Caco-2 (cell line): ENCODE measurements at regions of chr12 and their contacts with region 1.

Region 1: DNA sequence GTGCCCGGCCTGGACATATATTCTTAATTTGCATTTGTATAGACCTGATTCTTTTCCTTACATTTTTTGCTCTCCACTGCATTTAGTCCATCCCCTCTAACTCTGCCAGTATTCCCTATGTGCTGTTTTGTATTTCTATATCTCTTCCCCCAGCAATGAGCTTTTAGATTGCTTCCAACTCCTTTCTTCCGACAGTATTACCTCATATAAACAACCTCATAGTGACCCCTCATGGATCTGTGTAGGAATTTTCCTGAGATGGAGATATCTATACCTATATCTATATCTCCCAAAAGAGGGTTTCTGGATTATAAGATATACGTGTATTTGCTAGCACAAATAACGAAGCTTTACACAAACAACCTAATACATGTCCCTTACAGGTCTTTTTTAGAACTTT is 161.9 kb downstream of the CRADD start:
- DNase-seq: no peak
- H3K4me3 ChIP-seq: no peak overlapping the region
- H3K4me3 Mint-ChIP-seq: no peak overlapping the region
- H3K27ac Mint-ChIP-seq: no peak overlapping the region
- H3K4me1 ChIP-seq: no peaks in the 10 kb centered on the region
- H3K4me1 Mint-ChIP-seq: peaks cover 17% of the 10 kb centered on the region
- H3K27me3 ChIP-seq: no peaks in the 10 kb centered on the region
- H3K27me3 Mint-ChIP-seq: no peaks in the 10 kb centered on the region
- CTCF ChIP-seq: no peak

Region 2: DNA sequence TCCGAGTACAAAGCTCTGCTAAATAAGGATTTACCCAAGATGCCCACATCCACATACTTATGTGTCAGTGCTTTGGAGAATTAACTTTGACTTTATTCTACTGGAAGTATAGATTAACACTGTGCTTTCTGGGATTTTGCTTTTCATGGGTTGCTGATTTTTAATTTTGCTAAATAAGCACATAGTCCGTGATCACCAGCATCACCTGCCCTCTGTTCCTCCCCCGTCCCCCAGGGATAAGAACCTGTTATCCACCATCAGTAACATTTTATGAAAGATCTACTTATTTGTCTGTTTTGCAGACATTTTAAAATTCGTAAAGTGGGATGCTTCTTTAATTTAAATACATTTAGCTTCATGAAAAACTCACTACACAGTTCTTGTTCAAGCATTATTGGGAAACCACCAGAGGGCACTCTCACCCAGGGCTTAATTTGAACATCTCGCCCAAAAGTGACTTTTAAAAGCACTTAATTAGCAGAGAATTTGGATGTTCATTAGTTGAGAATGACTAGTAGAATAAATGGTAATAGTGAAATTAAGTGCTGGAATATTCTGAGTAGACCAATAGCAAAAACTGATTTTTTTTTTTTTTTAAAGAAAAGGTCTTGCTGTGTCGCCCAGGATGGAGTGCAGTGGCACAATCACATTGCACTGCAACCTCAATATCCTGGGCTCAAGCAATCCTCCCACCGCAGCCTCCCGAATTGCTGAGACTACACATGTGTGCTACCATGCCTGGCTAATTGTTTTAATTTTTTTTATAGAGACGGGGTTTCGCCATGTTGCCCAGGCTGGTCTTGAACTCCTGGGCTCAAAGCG is 336.1 kb before region 1 on chr12:
- CTCF ChIA-PET with region 1: interaction called, 4 read pairs
- POLR2A ChIA-PET with region 1: no interaction called
- intact Hi-C with region 1: loop called (anchors 2 kb)
- DNase-seq: peak in 1 of 2 experiments; percentile 67
- H3K4me3 ChIP-seq: no peak overlapping the region
- H3K4me3 Mint-ChIP-seq: no peak overlapping the region
- H3K27ac Mint-ChIP-seq: no peak overlapping the region
- H3K4me1 ChIP-seq: no peaks in the 10 kb centered on the region
- H3K4me1 Mint-ChIP-seq: no peaks in the 10 kb centered on the region
- H3K27me3 ChIP-seq: no peaks in the 10 kb centered on the region
- H3K27me3 Mint-ChIP-seq: no peaks in the 10 kb centered on the region
- CTCF ChIP-seq: peak; percentile 75 to 76